ENCODE measurements at regions of chr16 and their contacts with region 1.

Region 1: GRCh38 chr16:69404275-69404805 is 18.5 kb upstream of the TERF2 start:
- DNase-seq: peak in 3 of 4 donors; percentile 10 to 41 (median 34)
- ATAC-seq: peak; percentile 52
- H3K4me3 ChIP-seq: no peak overlapping the region
- H3K27ac ChIP-seq: peak overlapping the region; percentile 2 to 51 (median 30)
- H3K4me1 ChIP-seq: peaks cover 14% of the 10 kb centered on the region
- H3K27me3 ChIP-seq: no peaks in the 10 kb centered on the region
- CTCF ChIP-seq: no peak
- POLR2A ChIP-seq: no peak

Region 2: GRCh38 chr16:69554495-69554894 is 150.2 kb after region 1 on chr16:
- intact Hi-C with region 1: loop called (anchors 10 kb)
- DNase-seq: no peak
- ATAC-seq: no peak
- H3K4me3 ChIP-seq: no peak overlapping the region
- H3K27ac ChIP-seq: no peak overlapping the region
- H3K4me1 ChIP-seq: no peaks in the 10 kb centered on the region
- H3K27me3 ChIP-seq: no peaks in the 10 kb centered on the region
- CTCF ChIP-seq: no peak
- POLR2A ChIP-seq: no peak